ENCODE measurements at regions of chr5 and their contacts with region 1.

Region 1: DNA sequence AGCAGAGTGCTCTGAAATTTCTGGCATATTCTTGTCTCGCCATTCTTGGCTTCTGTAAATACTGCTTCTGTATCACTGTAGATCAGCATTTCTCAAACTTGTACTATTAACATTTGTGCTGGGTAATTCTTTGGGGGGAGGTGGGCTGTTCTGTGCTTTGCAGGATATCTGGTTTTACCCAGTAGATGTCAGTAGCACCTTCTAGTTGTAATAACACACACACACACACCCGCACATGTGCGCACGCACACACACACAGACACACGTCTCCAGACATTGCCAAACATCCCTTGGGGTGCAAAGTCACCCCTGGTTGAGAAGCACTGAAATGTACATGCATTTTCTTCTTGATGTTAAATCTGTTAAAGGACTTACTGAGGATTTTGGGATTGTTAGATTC is 304.1 kb downstream of the MAT2B start:
- DNase-seq: no peak
- H3K4me3 ChIP-seq: no peak overlapping the region
- H3K27ac ChIP-seq: no peak overlapping the region
- H3K4me1 ChIP-seq: no peaks in the 10 kb centered on the region
- H3K27me3 ChIP-seq: no peaks in the 10 kb centered on the region
- CTCF ChIP-seq: no peak

Region 2: DNA sequence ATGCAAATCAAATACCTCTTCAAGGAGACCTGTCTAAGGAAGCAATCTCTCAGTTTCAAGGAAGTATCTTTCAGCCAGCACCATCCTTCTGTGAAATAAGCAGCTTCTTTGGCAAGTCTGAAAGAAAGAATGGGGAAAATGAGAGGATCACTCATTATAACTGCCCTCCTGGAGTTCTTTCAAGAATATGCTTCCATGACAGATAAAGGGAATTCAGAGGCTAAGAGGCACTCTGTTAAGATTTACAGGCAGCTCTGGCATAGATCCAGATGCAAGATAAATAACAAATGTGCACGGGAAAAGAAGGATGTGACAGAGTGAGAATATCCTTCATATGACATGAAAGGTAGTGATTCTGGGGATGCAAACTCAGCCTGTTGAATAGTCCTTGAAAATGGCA is 720.2 kb before region 1 on chr5:
- CTCF ChIA-PET with region 1: no interaction called
- POLR2A ChIA-PET with region 1: no interaction called
- intact Hi-C with region 1: no loop called
- DNase-seq: no peak
- H3K4me3 ChIP-seq: no peak overlapping the region
- H3K27ac ChIP-seq: no peak overlapping the region
- H3K4me1 ChIP-seq: no peaks in the 10 kb centered on the region
- H3K27me3 ChIP-seq: no peaks in the 10 kb centered on the region
- CTCF ChIP-seq: no peak

Region 3: GRCh38 chr5:163540696-163541095 is 268.8 kb before region 1 on chr5:
- CTCF ChIA-PET with region 1: no interaction called
- POLR2A ChIA-PET with region 1: no interaction called
- intact Hi-C with region 1: no loop called
- DNase-seq: no peak
- H3K4me3 ChIP-seq: no peak overlapping the region
- H3K27ac ChIP-seq: no peak overlapping the region
- H3K4me1 ChIP-seq: no peaks in the 10 kb centered on the region
- H3K27me3 ChIP-seq: peaks cover 30% of the 10 kb centered on the region
- CTCF ChIP-seq: no peak

Region 4: GRCh38 chr5:163978897-163979296 is 169.4 kb after region 1 on chr5:
- CTCF ChIA-PET with region 1: no interaction called
- POLR2A ChIA-PET with region 1: no interaction called
- intact Hi-C with region 1: no loop called
- DNase-seq: no peak
- H3K4me3 ChIP-seq: no peak overlapping the region
- H3K27ac ChIP-seq: no peak overlapping the region
- H3K4me1 ChIP-seq: no peaks in the 10 kb centered on the region
- H3K27me3 ChIP-seq: no peaks in the 10 kb centered on the region
- CTCF ChIP-seq: no peak

Region 5: GRCh38 chr5:164191240-164191639 is 381.8 kb after region 1 on chr5:
- CTCF ChIA-PET with region 1: no interaction called
- POLR2A ChIA-PET with region 1: interaction called, 10 read pairs
- intact Hi-C with region 1: no loop called
- DNase-seq: no peak
- H3K4me3 ChIP-seq: no peak overlapping the region
- H3K27ac ChIP-seq: no peak overlapping the region
- H3K4me1 ChIP-seq: no peaks in the 10 kb centered on the region
- H3K27me3 ChIP-seq: no peaks in the 10 kb centered on the region
- CTCF ChIP-seq: no peak